PC-3 (cell line): ENCODE measurements at regions of chr3 and their contacts with region 1.

Region 1: GRCh38 chr3:99803297-99803696 is 14.4 kb upstream of the CMSS1 start:
- DNase-seq: no peak
- ATAC-seq: no peak
- H3K4me3 ChIP-seq: no peak overlapping the region
- H3K27ac ChIP-seq: no peak overlapping the region
- H3K4me1 ChIP-seq: no peaks in the 10 kb centered on the region
- H3K27me3 ChIP-seq: no peaks in the 10 kb centered on the region
- CTCF ChIP-seq: no peak

Region 2: DNA sequence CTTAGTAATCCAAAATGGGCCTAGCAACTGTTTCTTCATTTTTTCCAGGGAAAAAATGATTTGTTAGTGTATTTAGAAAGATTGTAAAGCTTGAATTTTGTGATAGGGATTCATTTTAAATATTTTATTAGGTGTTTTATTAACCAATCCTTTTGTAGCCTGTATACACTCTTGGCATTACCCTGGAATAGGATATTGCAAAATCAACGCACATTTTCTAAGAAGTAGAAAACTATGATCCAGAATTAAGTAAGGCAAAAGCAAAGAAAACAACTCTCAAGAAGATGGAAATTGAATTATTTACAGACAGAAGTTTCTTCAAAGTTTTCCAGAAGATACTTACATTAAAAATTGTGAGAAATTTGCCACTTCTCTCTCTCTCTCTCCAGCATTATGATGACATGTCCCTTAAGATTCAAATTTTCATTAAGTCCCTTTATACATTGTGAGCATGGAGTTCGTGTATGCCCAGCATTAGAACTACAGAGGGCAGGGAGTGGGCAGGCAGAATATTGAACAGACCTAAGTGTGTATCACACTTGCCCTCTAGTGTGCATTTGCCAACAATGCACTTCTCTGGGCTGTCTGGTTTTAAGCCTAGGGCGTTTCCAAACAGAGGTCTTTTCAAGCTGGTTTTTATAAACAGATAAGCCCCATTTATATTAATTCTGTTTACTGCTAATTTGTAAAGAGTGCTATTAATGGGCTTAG is 14.1 kb before region 1 on chr3:
- CTCF ChIA-PET with region 1: interaction called, 3 read pairs
- POLR2A ChIA-PET with region 1: no interaction called
- intact Hi-C with region 1: loop called (anchors 1 kb)
- DNase-seq: peak; percentile 84
- ATAC-seq: peak; percentile 100
- H3K4me3 ChIP-seq: no peak overlapping the region
- H3K27ac ChIP-seq: no peak overlapping the region
- H3K4me1 ChIP-seq: peaks cover 4% of the 10 kb centered on the region; the same call in 1 of the 2 replicates
- H3K27me3 ChIP-seq: no peaks in the 10 kb centered on the region
- CTCF ChIP-seq: peak; percentile 94